GM12878 (cell line): ENCODE measurements at regions of chr7 and their contacts with region 1.

Region 1: DNA sequence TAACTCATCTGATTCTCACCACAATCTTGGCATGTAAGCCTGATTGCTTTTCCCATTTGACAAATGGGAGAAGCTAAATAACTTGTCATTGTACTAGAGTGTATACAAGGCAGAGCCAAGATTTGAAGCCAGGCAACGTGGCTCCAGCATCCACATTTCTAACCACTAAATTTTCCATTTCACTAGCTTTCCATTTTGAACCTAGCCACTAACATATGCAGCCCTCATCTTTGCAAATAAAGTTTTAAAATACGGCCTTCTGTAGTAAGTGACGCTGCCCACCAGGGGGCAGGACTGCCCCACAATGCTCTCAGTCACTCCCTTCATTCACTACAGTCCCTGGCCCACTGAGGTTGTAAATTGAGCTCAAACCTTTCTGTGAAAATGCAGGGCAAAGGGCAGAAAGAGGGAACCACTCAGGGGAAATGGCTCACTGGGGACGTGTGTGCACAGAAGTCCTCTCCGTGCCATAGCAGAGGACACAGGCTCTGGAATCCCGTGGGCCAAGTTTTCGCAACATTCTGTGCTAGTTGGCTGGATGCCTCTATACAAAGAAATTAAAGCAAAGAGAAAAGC is 315.7 kb downstream of the TNS3 start:
- DNase-seq: peak; percentile 12
- ATAC-seq: peak; percentile 89
- H3K4me3 ChIP-seq: no peak overlapping the region
- H3K27ac ChIP-seq: no peak overlapping the region
- H3K4me1 ChIP-seq: no peaks in the 10 kb centered on the region
- H3K27me3 ChIP-seq: no peaks in the 10 kb centered on the region
- CTCF ChIP-seq: peak; percentile 87 to 92 (median 90)
- EP300 ChIP-seq: no peak
- POLR2A ChIP-seq: no peak
- RAD21 ChIP-seq: peak; percentile 97

Region 2: DNA sequence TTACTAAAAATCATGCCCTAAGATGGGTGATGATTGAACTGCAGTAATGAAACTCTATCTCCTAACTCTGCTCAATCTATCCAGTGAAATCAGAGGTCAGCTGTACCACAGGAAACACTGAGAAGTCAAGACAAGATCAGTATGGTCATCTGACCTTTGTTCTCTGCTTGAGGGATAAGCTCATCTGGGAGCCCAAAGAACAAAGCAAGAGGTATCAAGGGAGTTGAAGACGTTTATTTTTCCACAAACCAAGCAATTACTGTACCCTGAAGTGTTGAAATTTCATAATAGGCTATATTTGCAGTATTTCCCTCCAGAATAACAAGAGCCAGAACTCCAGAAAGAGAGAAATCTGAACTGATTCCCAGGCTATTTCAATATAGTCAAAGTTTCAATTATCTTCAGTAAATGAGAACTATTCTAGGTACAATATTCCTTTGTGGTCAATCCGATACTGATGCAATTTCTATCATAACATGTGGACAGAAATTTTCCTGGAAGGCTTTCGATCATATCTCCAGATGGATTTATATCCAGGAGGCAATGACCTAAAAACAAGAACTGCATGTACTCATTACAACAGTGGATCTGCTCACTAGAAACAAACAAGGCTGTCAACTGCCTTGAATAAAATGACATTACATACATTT is 29.6 kb before region 1 on chr7:
- CTCF ChIA-PET with region 1: no interaction called
- POLR2A ChIA-PET with region 1: no interaction called
- RAD21 ChIA-PET with region 1: no interaction called
- SMC1A ChIA-PET with region 1: no interaction called
- in situ Hi-C with region 1: no loop called
- intact Hi-C with region 1: no loop called
- DNase-seq: no peak
- ATAC-seq: no peak
- H3K4me3 ChIP-seq: no peak overlapping the region
- H3K27ac ChIP-seq: no peak overlapping the region
- H3K4me1 ChIP-seq: no peaks in the 10 kb centered on the region
- H3K27me3 ChIP-seq: no peaks in the 10 kb centered on the region; a peak in 2 of 4 replicates
- CTCF ChIP-seq: no peak
- EP300 ChIP-seq: no peak
- POLR2A ChIP-seq: no peak
- RAD21 ChIP-seq: no peak

Region 3: GRCh38 chr7:47254081-47255006 is 11.9 kb before region 1 on chr7:
- CTCF ChIA-PET with region 1: interaction called, 19 read pairs
- POLR2A ChIA-PET with region 1: interaction called, 3 read pairs
- RAD21 ChIA-PET with region 1: interaction called, 4 read pairs
- SMC1A ChIA-PET with region 1: interaction called, 3 read pairs
- in situ Hi-C with region 1: no loop called
- intact Hi-C with region 1: no loop called
- DNase-seq: no peak
- ATAC-seq: peak; percentile 97
- H3K4me3 ChIP-seq: peak overlapping the region; percentile 27; the same call in 1 of the 2 replicates
- H3K27ac ChIP-seq: no peak overlapping the region
- H3K4me1 ChIP-seq: no peaks in the 10 kb centered on the region
- H3K27me3 ChIP-seq: peaks cover 0 to 4% of the 10 kb centered on the region in 2 experiments; a peak in 2 of 4 replicates
- CTCF ChIP-seq: peak; percentile 63 to 78 (median 65); a peak in 5 of 6 replicates
- EP300 ChIP-seq: no peak
- POLR2A ChIP-seq: no peak
- RAD21 ChIP-seq: peak; percentile 38

Region 4: DNA sequence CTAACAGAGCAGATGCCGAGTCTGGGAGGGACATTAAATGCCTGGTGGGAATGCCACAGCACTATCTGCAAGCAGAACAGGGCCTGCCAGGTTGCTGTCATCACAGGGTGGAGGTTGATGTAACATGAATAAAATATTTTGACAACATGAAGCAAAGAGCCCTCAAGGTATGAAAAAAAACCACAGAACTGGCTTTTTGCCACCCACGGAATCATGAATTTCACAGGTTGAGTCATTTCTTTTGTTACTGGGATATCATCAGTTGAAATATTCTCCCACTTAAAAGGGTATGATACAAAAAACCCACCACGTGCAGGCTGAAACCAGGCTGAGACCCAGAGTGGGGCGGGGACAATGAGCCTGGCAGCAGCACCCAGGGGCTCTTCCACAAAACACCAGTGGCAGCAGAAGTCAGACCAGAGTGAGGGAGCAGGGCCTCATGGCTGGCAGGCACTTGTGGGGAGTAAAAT is 95.6 kb after region 1 on chr7:
- CTCF ChIA-PET with region 1: no interaction called
- POLR2A ChIA-PET with region 1: no interaction called
- RAD21 ChIA-PET with region 1: no interaction called
- SMC1A ChIA-PET with region 1: no interaction called
- in situ Hi-C with region 1: no loop called
- intact Hi-C with region 1: no loop called
- DNase-seq: peak; percentile 12
- ATAC-seq: peak; percentile 66
- H3K4me3 ChIP-seq: no peak overlapping the region
- H3K27ac ChIP-seq: no peak overlapping the region
- H3K4me1 ChIP-seq: no peaks in the 10 kb centered on the region; the same call in 1 of the 2 replicates
- H3K27me3 ChIP-seq: no peaks in the 10 kb centered on the region
- CTCF ChIP-seq: no peak
- EP300 ChIP-seq: no peak
- POLR2A ChIP-seq: no peak
- RAD21 ChIP-seq: no peak

Region 5: DNA sequence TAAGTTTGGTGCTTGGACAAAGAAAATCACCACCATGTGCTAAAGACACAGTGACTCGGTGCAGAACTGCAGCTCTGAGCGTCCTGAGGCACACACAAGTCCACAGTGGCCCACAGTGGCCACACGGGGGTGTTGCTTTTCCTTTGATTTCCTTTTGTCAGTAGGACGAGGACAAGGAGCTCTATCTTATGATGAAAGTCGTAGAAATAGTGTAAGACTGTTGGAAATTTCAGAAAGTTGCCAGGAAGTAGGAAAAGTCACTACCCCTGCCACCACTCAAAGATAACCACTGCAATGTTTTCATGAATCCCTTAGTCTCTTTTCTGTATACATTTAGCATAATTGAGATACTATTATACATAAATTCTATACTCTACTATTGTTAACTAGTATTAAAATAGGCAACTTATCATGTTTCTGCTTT is 169.7 kb after region 1 on chr7:
- CTCF ChIA-PET with region 1: interaction called, 3 read pairs
- POLR2A ChIA-PET with region 1: no interaction called
- RAD21 ChIA-PET with region 1: interaction called, 3 read pairs
- SMC1A ChIA-PET with region 1: interaction called, 5 read pairs
- in situ Hi-C with region 1: no loop called
- intact Hi-C with region 1: loop called (anchors 10 kb)
- DNase-seq: no peak
- ATAC-seq: peak; percentile 54; the same call in 1 of the 3 replicates
- H3K4me3 ChIP-seq: no peak overlapping the region
- H3K27ac ChIP-seq: no peak overlapping the region
- H3K4me1 ChIP-seq: no peaks in the 10 kb centered on the region
- H3K27me3 ChIP-seq: no peaks in the 10 kb centered on the region
- CTCF ChIP-seq: peak; percentile 30 to 57 (median 36); a peak in 5 of 6 replicates
- EP300 ChIP-seq: no peak
- POLR2A ChIP-seq: no peak
- RAD21 ChIP-seq: peak; percentile 50

Region 6: GRCh38 chr7:47818796-47819606 is 552.8 kb after region 1 on chr7:
- CTCF ChIA-PET with region 1: interaction called, 51 read pairs
- POLR2A ChIA-PET with region 1: no interaction called
- RAD21 ChIA-PET with region 1: interaction called, 30 read pairs
- SMC1A ChIA-PET with region 1: interaction called, 30 read pairs
- in situ Hi-C with region 1: loop called (anchors 5 kb)
- intact Hi-C with region 1: loop called (anchors 1 kb)
- DNase-seq: peak; percentile 15
- ATAC-seq: peak; percentile 77
- H3K4me3 ChIP-seq: no peak overlapping the region
- H3K27ac ChIP-seq: no peak overlapping the region
- H3K4me1 ChIP-seq: no peaks in the 10 kb centered on the region
- H3K27me3 ChIP-seq: peaks cover 3% of the 10 kb centered on the region in 2 experiments; a peak in 2 of 4 replicates
- CTCF ChIP-seq: peak; percentile 88 to 95 (median 93)
- EP300 ChIP-seq: no peak
- POLR2A ChIP-seq: no peak
- RAD21 ChIP-seq: peak; percentile 99

Region 7: DNA sequence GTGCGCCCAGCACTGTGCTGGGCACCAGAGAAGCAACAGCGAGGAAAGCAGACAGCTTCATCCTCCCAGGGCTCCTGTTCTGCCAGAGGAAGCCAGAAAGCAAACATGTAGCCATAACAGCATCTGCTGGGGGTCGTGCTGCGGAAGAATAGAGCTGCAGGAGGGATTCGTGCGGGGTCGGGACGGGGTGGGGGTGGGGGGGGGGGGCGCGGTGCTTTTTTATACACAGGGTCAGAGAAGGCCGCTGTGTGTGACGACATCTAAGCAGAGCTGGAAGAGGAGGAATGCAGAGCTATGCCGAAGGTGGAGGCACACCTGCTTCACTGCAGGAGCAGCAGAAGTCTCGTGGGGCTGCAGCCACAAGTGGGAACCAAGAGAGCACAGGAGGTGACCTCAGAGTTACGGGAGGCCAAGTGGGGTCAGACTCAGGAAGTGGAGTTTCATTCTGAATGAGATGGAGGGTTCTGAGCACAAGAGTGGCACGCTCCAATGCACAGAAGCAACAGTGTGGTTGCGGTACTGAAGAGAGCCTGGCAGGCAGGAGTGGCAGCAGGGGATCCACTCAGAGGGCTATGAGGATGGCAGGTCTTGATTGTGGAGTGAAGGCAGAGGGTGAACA is 671.0 kb after region 1 on chr7:
- CTCF ChIA-PET with region 1: interaction called, 11 read pairs
- POLR2A ChIA-PET with region 1: no interaction called
- RAD21 ChIA-PET with region 1: interaction called, 11 read pairs
- SMC1A ChIA-PET with region 1: no interaction called
- in situ Hi-C with region 1: no loop called
- intact Hi-C with region 1: loop called (anchors 1 kb)
- DNase-seq: peak; percentile 91
- ATAC-seq: peak; percentile 98
- H3K4me3 ChIP-seq: peak overlapping the region; percentile 9; the same call in 1 of the 2 replicates
- H3K27ac ChIP-seq: peak overlapping the region; percentile 68
- H3K4me1 ChIP-seq: peaks cover 28% of the 10 kb centered on the region
- H3K27me3 ChIP-seq: peaks cover 0 to 1% of the 10 kb centered on the region in 2 experiments; a peak in 2 of 4 replicates
- CTCF ChIP-seq: no peak
- EP300 ChIP-seq: peak; percentile 94 to 98
- POLR2A ChIP-seq: peak; percentile 58; the same call in 1 of the 2 replicates
- RAD21 ChIP-seq: no peak

Region 8: DNA sequence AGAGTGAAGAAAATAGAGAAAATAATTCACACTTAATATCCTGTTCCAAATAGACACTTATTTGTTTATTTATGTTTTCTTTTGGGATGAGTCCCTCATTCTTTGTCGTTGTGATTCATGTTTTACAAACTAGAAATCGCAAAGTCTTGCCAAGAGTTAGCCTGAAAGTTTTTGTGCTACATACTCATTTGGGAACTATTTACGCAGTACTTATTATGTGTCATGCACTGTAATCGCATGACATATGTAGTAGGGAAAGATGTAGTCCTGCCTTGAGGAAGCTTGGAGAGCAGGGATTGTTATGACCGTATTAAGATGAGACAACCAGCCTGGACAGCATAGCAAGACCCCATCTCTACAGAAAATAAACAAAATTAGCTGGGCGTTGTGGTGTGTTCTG is 1094.4 kb after region 1 on chr7:
- CTCF ChIA-PET with region 1: no interaction called
- POLR2A ChIA-PET with region 1: no interaction called
- RAD21 ChIA-PET with region 1: no interaction called
- SMC1A ChIA-PET with region 1: no interaction called
- in situ Hi-C with region 1: no loop called
- intact Hi-C with region 1: no loop called
- DNase-seq: no peak
- ATAC-seq: no peak
- H3K4me3 ChIP-seq: no peak overlapping the region
- H3K27ac ChIP-seq: no peak overlapping the region
- H3K4me1 ChIP-seq: no peaks in the 10 kb centered on the region
- H3K27me3 ChIP-seq: no peaks in the 10 kb centered on the region
- CTCF ChIP-seq: no peak
- EP300 ChIP-seq: no peak
- POLR2A ChIP-seq: no peak
- RAD21 ChIP-seq: no peak